ENCODE measurements at regions of chr1 and their contacts with region 1.

Region 1: GRCh38 chr1:66182551-66183178 is 351.3 kb upstream of the SGIP1 start:
- DNase-seq: peak in 6 of 9 experiments; percentile 1 to 63 (median 34)
- ATAC-seq: peak; percentile 92
- H3K4me3 ChIP-seq: no peak overlapping the region
- H3K4me3 Mint-ChIP-seq: no peak overlapping the region
- H3K27ac ChIP-seq: no peak overlapping the region
- H3K27ac Mint-ChIP-seq: no peak overlapping the region
- H3K4me1 ChIP-seq: peaks cover 3% of the 10 kb centered on the region
- H3K4me1 Mint-ChIP-seq: peaks cover 22% of the 10 kb centered on the region
- H3K27me3 ChIP-seq: no peaks in the 10 kb centered on the region
- H3K27me3 Mint-ChIP-seq: no peaks in the 10 kb centered on the region
- CTCF ChIP-seq: no peak

Region 2: DNA sequence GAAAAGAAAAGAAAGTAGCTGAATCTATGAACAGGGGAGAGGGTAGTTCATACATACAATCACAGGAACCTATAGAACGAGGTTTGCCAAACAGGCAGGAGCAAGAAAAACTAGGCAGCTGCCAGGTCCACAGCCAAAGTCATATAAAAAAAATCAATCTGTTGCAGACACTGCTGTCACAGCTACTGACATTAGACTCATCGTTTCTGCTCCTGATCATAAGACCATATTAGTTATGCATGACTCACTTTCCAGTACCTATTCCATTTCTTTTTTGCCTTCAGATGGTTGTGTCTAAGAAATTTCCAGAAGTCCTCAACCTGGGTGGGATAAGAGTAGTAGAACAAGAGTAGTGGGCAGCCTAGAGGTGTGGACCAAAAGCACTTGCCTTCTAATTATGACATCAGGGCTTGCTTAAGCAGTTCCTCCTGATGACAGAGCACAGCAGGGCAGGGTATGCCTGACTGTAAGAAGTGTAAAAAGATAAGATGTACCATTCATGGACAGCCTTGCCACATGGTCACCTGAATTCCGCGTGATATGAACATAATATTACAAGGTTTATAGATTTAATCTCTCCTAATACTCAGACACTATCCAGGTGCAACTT is 28.1 kb after region 1 on chr1:
- CTCF ChIA-PET with region 1: interaction called, 3 read pairs
- POLR2A ChIA-PET with region 1: no interaction called
- intact Hi-C with region 1: loop called in 1 of 2 experiments (anchors 1 kb)
- DNase-seq: no peak
- ATAC-seq: no peak
- H3K4me3 ChIP-seq: no peak overlapping the region
- H3K4me3 Mint-ChIP-seq: no peak overlapping the region
- H3K27ac ChIP-seq: no peak overlapping the region
- H3K27ac Mint-ChIP-seq: no peak overlapping the region
- H3K4me1 ChIP-seq: peaks cover 7% of the 10 kb centered on the region
- H3K4me1 Mint-ChIP-seq: peaks cover 13% of the 10 kb centered on the region
- H3K27me3 ChIP-seq: no peaks in the 10 kb centered on the region
- H3K27me3 Mint-ChIP-seq: peaks cover 2% of the 10 kb centered on the region
- CTCF ChIP-seq: no peak